GM12878 (cell line): ENCODE measurements at regions of chr11 and their contacts with region 1.

Region 1: GRCh38 chr11:66112601-66113098 is 42.6 kb downstream of the PACS1 start:
- DNase-seq: no peak
- ATAC-seq: peak; percentile 77
- H3K4me3 ChIP-seq: peak overlapping the region; percentile 45
- H3K27ac ChIP-seq: peak overlapping the region; percentile 88
- H3K4me1 ChIP-seq: peaks cover 72% of the 10 kb centered on the region
- H3K27me3 ChIP-seq: no peaks in the 10 kb centered on the region
- CTCF ChIP-seq: no peak
- EP300 ChIP-seq: peak; percentile 80 to 90; a peak in 3 of 4 replicates
- POLR2A ChIP-seq: no peak
- RAD21 ChIP-seq: no peak

Region 2: GRCh38 chr11:66001942-66002647 is 110.6 kb before region 1 on chr11 and contains the starts of genes BANF1 and EIF1AD:
- CTCF ChIA-PET with region 1: no interaction called
- POLR2A ChIA-PET with region 1: interaction called, 10 read pairs
- RAD21 ChIA-PET with region 1: no interaction called
- SMC1A ChIA-PET with region 1: no interaction called
- in situ Hi-C with region 1: no loop called
- intact Hi-C with region 1: no loop called
- DNase-seq: peak; percentile 93
- ATAC-seq: peak; percentile 87
- H3K4me3 ChIP-seq: peak within 1 kb of the TSS; percentile 93
- H3K27ac ChIP-seq: peak within 1 kb of the TSS; percentile 93
- H3K4me1 ChIP-seq: peaks cover 11% of the 10 kb centered on the region
- H3K27me3 ChIP-seq: no peaks in the 10 kb centered on the region
- CTCF ChIP-seq: no peak
- EP300 ChIP-seq: no peak; a peak in 1 of 4 replicates
- POLR2A ChIP-seq: peak; percentile 96
- RAD21 ChIP-seq: no peak
- polyA plus RNA-seq, gene BANF1: 501 to 574 TPM
- polyA plus RNA-seq, gene EIF1AD: 51.5 to 56.8 TPM

Region 3: GRCh38 chr11:66081505-66081904 is 31.1 kb before region 1 on chr11:
- CTCF ChIA-PET with region 1: interaction called, 14 read pairs
- POLR2A ChIA-PET with region 1: interaction called, 16 read pairs
- RAD21 ChIA-PET with region 1: interaction called, 25 read pairs
- SMC1A ChIA-PET with region 1: interaction called, 265 read pairs
- in situ Hi-C with region 1: no loop called
- intact Hi-C with region 1: no loop called
- DNase-seq: no peak
- ATAC-seq: peak; percentile 93
- H3K4me3 ChIP-seq: peak overlapping the region; percentile 8; the same call in 1 of the 2 replicates
- H3K27ac ChIP-seq: peak overlapping the region; percentile 60
- H3K4me1 ChIP-seq: peaks cover 31% of the 10 kb centered on the region
- H3K27me3 ChIP-seq: no peaks in the 10 kb centered on the region
- CTCF ChIP-seq: no peak
- EP300 ChIP-seq: no peak
- POLR2A ChIP-seq: no peak
- RAD21 ChIP-seq: no peak

Region 4: DNA sequence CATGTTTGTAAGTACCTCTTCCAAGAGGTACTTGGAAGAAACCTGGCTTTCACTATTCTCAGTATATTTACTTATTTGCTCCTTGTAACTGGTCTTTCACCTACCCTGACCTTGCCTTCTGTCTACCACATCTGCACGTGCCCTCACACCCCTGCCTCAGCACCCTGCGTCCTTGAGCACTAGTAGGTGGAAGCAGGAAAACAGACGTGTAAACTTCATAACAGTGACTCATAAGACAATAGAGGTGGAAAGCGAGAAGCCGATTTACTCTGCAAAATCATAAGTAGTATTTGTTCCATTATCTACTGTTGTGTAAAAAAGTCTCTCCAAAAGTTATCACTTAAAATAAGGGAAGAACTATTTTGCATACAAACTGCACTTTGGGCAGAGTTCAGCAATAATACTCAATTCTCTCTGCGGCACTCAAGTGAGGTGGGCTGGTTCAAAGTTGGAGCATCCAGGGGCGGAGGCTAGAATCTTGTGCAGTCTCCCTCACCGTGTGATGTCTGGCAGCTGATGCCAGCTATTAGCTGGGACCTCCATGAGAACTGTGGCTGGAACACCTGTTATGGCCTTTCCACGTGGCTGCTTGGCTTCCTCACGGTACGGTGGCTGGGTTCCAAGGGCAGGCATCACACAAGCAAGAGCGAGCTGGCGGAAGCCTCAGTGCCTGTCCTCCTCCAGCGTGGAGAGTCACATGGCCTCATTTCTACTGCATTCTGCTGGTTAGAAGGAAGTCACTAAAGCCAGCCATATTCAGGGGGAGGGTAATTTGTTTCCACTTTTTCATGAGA is 12.2 kb before region 1 on chr11:
- CTCF ChIA-PET with region 1: interaction called, 4 read pairs
- POLR2A ChIA-PET with region 1: interaction called, 15 read pairs
- RAD21 ChIA-PET with region 1: interaction called, 6 read pairs
- SMC1A ChIA-PET with region 1: interaction called, 18 read pairs
- in situ Hi-C with region 1: no loop called
- intact Hi-C with region 1: no loop called
- DNase-seq: no peak
- ATAC-seq: peak; percentile 94
- H3K4me3 ChIP-seq: peak overlapping the region; percentile 30
- H3K27ac ChIP-seq: peak overlapping the region; percentile 55
- H3K4me1 ChIP-seq: peaks cover 28% of the 10 kb centered on the region
- H3K27me3 ChIP-seq: no peaks in the 10 kb centered on the region
- CTCF ChIP-seq: no peak
- EP300 ChIP-seq: no peak
- POLR2A ChIP-seq: peak; percentile 68
- RAD21 ChIP-seq: no peak

Region 5: GRCh38 chr11:66126808-66127555 is 14.3 kb after region 1 on chr11:
- CTCF ChIA-PET with region 1: interaction called, 37 read pairs
- POLR2A ChIA-PET with region 1: interaction called, 61 read pairs
- RAD21 ChIA-PET with region 1: interaction called, 63 read pairs
- SMC1A ChIA-PET with region 1: interaction called, 161 read pairs
- in situ Hi-C with region 1: no loop called
- intact Hi-C with region 1: no loop called
- DNase-seq: no peak
- ATAC-seq: peak; percentile 87
- H3K4me3 ChIP-seq: peak overlapping the region; percentile 60
- H3K27ac ChIP-seq: peak overlapping the region; percentile 91
- H3K4me1 ChIP-seq: peaks cover 52% of the 10 kb centered on the region
- H3K27me3 ChIP-seq: no peaks in the 10 kb centered on the region
- CTCF ChIP-seq: 0 out of 6 replicates have a peak, but pooled peaks of 1 of the 3 experiments have one; percentile 9
- EP300 ChIP-seq: no peak
- POLR2A ChIP-seq: peak; percentile 64
- RAD21 ChIP-seq: no peak

Region 6: DNA sequence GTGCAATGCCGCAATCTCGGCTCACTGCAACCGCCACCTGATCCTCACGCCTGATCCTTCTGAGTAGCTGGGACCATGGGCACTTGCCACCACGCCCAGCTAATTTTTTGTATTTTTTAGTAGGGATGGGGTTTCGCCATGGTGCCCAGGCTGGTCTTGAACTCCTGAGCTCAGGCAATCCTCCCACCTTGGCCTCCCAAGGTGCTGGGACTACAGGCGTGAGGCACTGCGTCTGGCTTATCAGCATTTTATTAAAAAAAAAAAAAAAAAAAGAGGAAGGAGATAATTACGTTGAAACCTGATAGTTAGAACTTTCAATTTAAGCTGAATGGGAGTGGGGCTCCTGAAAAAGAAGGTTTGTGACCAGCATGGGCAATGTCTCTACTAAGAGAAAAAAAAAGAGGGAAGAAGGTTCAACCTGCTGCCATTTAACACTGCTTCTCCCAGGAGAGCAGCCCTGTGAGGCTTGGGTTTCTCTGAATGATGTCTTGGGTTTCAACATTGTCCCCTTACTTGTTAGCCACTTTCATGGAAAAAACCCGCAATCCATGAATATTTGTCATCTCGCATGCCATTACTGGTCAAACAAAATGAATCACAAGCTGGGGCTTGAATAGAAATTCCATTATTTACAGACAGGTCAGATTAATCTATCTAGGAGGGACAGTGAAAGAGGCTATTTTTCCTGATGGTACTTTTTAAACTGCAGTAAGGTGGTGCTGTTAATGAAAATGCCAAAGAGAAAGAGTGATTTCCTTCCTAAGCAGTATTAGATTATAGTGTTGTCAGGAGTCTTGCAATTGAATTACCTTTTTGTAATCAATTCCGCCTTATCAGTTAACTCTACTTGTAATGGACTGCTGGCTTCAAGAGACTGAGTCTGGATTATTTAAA is 30.0 kb after region 1 on chr11:
- CTCF ChIA-PET with region 1: interaction called, 3 read pairs
- POLR2A ChIA-PET with region 1: interaction called, 91 read pairs
- RAD21 ChIA-PET with region 1: interaction called, 3 read pairs
- SMC1A ChIA-PET with region 1: interaction called, 161 read pairs
- in situ Hi-C with region 1: no loop called
- intact Hi-C with region 1: loop called (anchors 2 kb)
- DNase-seq: no peak
- ATAC-seq: no peak
- H3K4me3 ChIP-seq: no peak overlapping the region
- H3K27ac ChIP-seq: no peak overlapping the region
- H3K4me1 ChIP-seq: peaks cover 42% of the 10 kb centered on the region
- H3K27me3 ChIP-seq: no peaks in the 10 kb centered on the region
- CTCF ChIP-seq: no peak
- EP300 ChIP-seq: no peak
- POLR2A ChIP-seq: no peak
- RAD21 ChIP-seq: no peak

Region 7: GRCh38 chr11:66151273-66151672 is 38.6 kb after region 1 on chr11:
- CTCF ChIA-PET with region 1: interaction called, 3 read pairs
- POLR2A ChIA-PET with region 1: interaction called, 3 read pairs
- RAD21 ChIA-PET with region 1: interaction called, 3 read pairs
- SMC1A ChIA-PET with region 1: interaction called, 17 read pairs
- in situ Hi-C with region 1: no loop called
- intact Hi-C with region 1: no loop called
- DNase-seq: no peak
- ATAC-seq: no peak
- H3K4me3 ChIP-seq: no peak overlapping the region
- H3K27ac ChIP-seq: peak overlapping the region; percentile 31
- H3K4me1 ChIP-seq: peaks cover 27% of the 10 kb centered on the region
- H3K27me3 ChIP-seq: no peaks in the 10 kb centered on the region
- CTCF ChIP-seq: no peak
- EP300 ChIP-seq: no peak
- POLR2A ChIP-seq: no peak
- RAD21 ChIP-seq: no peak